CD8-positive, alpha-beta T cell (primary cell): ENCODE measurements at regions of chr6 and their contacts with region 1.

Region 1: DNA sequence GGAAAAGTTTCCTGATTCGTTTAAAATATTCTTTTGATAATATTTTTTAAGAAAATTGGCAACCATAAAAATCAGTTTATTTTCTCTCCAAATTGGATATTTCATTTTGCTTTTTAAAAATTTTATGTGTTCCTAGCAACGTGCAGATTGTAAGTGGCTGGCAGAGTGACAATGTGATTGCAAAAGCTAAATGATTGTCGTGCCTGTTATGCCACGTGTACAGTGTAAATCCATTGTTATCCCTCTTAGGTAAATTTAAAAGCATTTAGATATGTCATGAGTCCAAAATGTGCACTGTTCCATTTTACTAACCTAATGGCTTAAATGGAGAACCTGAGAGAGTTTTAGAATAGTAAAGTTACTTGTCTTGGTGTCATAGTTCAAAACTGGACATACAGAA is 94.4 kb upstream of the ADGRF4 start:
- DNase-seq: no peak
- ATAC-seq: no peak
- H3K4me3 ChIP-seq: no peak overlapping the region
- H3K4me3 Mint-ChIP-seq: no peak overlapping the region
- H3K27ac ChIP-seq: no peak overlapping the region
- H3K27ac Mint-ChIP-seq: no peak overlapping the region
- H3K4me1 ChIP-seq: no peaks in the 10 kb centered on the region
- H3K4me1 Mint-ChIP-seq: no peaks in the 10 kb centered on the region
- H3K27me3 ChIP-seq: no peaks in the 10 kb centered on the region
- H3K27me3 Mint-ChIP-seq: no peaks in the 10 kb centered on the region
- CTCF ChIP-seq: no peak

Region 2: GRCh38 chr6:47587493-47587892 is 16.5 kb before region 1 on chr6:
- CTCF ChIA-PET with region 1: no interaction called
- POLR2A ChIA-PET with region 1: no interaction called
- intact Hi-C with region 1: loop called in 1 of 2 experiments (anchors 2 kb)
- DNase-seq: no peak
- ATAC-seq: no peak
- H3K4me3 ChIP-seq: no peak overlapping the region
- H3K4me3 Mint-ChIP-seq: no peak overlapping the region
- H3K27ac ChIP-seq: no peak overlapping the region
- H3K27ac Mint-ChIP-seq: no peak overlapping the region
- H3K4me1 ChIP-seq: no peaks in the 10 kb centered on the region
- H3K4me1 Mint-ChIP-seq: no peaks in the 10 kb centered on the region
- H3K27me3 ChIP-seq: no peaks in the 10 kb centered on the region
- H3K27me3 Mint-ChIP-seq: no peaks in the 10 kb centered on the region
- CTCF ChIP-seq: no peak

Region 3: GRCh38 chr6:47680051-47680450 is 76.1 kb after region 1 on chr6:
- CTCF ChIA-PET with region 1: no interaction called
- POLR2A ChIA-PET with region 1: no interaction called
- intact Hi-C with region 1: no loop called
- DNase-seq: no peak
- ATAC-seq: no peak
- H3K4me3 ChIP-seq: no peak overlapping the region
- H3K4me3 Mint-ChIP-seq: no peak overlapping the region
- H3K27ac ChIP-seq: no peak overlapping the region
- H3K27ac Mint-ChIP-seq: no peak overlapping the region
- H3K4me1 ChIP-seq: no peaks in the 10 kb centered on the region
- H3K4me1 Mint-ChIP-seq: no peaks in the 10 kb centered on the region
- H3K27me3 ChIP-seq: no peaks in the 10 kb centered on the region
- H3K27me3 Mint-ChIP-seq: no peaks in the 10 kb centered on the region
- CTCF ChIP-seq: no peak